Posterior vena cava (tissue), 2 donors: ENCODE measurements at regions of chr15 and their contacts with region 1.

Region 1: GRCh38 chr15:59879506-59880265 is 124.4 kb upstream of the FOXB1 start:
- DNase-seq: no peak

Region 2: DNA sequence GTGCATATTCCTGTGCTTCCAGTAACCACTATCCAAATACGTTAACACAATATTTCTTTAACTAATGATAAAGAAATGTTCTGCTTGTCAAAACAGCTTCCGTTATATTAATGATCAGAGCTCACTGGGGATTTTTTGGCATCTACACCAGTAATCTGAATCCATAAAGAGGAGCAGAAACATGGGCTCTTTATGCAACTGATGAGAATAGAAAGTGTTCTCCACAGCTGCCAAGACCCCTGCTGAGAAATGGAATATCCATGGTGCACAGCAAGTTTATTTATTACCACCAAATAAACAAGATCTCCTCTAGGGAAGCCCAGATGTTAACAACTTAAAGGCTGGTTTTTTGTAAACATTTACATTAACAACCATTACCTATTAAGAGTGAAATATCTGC is 1868.7 kb before region 1 on chr15:
- intact Hi-C with region 1: loop called in 1 of 2 experiments (anchors 5 kb)
- DNase-seq: no peak

Region 3: DNA sequence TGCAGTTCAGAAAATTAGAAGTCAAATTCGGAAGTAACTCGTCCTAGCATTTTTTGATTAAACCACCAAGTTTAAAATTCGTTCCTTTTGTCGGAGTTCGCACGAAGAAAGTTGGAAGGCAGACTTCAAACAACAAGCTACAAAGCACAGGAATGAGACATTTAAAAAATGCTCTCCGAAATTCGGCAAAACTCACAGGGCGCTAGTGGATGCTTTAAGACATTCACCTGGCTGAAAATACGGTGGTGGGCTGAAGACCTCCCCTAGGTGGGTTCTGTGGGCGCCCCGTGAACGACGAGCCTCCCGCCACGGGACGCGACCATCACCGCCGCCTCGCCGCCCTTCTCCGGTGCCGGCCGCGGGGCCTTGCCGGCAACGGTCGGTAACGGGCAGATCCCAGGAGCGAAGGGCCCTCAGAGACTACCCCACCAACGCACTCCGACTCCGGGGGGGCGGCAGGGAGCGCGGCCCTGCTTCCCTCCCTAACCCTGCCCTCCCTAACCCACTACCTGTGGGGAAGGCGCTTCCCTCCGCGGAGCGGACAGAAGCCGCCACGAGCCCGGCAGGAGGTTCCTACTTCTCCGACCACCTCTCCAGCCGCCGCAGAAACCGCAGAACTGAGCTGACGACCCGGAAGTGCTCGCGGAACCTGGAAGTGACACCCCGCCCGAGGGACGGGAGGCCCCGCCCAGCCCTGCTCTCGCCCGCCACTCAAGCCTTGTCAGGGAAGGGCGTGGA is 222.6 kb before region 1 on chr15 and contains the start of gene GTF2A2:
- intact Hi-C with region 1: no loop called
- DNase-seq: peak; percentile 98
- total RNA-seq, gene GTF2A2: 91.1 to 98.2 TPM